WTC11 (cell line): ENCODE measurements at regions of chr7 and their contacts with region 1.

Region 1: DNA sequence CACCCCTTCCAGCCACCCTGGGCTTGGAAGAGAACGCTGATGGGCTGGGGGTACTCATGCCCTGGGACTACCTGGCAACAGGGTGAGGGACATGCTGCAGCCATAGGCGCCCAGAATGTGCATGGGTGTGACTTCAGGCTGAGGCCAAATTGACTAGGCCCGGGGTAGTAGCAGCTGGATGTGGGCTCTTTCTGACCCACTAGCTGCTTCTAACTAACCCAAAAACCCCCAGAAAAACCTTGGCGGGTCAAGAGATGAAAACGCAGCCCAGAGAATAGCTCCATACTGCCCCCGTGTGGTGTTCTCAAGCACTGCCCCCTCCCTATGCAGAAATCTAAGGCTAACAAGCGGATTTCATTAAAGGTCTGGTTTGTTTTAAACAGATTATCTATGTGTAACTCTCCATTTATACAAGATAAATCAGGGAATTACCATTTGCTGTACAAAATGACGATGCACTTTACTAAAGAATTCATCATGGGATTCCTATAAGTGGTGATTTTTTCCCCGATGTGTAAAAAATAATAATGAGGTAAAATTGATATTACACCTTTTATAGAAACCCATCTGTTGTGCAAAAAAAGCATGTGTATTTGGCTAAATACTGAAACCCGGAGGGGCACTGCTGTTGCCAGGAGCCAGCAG is 4.2 kb downstream of the SMARCD3 start:
- DNase-seq: peak; percentile 67
- ATAC-seq: peak; percentile 7; the same call in 1 of the 2 replicates
- H3K4me3 Mint-ChIP-seq: peak overlapping the region; percentile 65
- H3K27ac Mint-ChIP-seq: no peak overlapping the region
- H3K4me1 Mint-ChIP-seq: peaks cover 41% of the 10 kb centered on the region
- H3K27me3 Mint-ChIP-seq: peaks cover 43% of the 10 kb centered on the region
- CTCF ChIP-seq: peak; percentile 84

Region 2: DNA sequence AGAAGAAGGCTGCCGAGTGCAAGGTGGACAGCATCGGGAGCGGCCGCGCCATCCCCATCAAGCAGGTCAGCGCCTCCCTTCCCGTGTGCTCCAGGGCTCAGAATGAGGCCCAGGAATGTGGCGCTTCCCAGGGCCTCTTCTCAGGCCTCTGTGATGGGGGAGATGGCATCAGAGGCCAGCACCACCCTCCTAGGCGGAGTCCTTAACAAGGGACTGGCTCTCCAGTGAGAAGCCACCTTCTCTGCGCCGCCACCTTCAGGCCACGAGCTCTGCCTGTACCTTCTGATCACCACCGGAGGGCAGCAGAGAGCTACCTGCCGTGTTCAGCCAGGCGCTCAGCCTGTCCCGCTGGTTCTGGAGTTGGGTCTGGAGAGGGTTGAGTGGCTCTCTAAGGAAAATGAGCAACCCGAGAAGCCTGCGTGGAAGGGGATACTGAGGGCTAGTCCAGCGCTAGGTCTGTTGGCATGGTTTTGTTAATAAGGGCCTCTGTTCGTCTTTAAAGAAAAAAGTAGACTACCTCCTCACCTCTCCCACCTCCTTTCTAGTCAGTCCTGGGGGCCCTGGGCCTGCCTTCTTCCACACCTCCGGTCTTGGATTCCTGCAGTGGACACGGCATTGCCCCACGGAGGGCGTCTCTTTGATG is 120.4 kb before region 1 on chr7:
- CTCF ChIA-PET with region 1: interaction called, 43 read pairs
- POLR2A ChIA-PET with region 1: no interaction called
- DNase-seq: peak; percentile 93
- ATAC-seq: peak; percentile 70
- H3K4me3 Mint-ChIP-seq: peak overlapping the region; percentile 30
- H3K27ac Mint-ChIP-seq: peak overlapping the region; percentile 95
- H3K4me1 Mint-ChIP-seq: peaks cover 31% of the 10 kb centered on the region
- H3K27me3 Mint-ChIP-seq: peaks cover 5% of the 10 kb centered on the region; the same call in 1 of the 2 replicates
- CTCF ChIP-seq: peak; percentile 95

Region 3: GRCh38 chr7:151191544-151191943 is 52.8 kb before region 1 on chr7:
- CTCF ChIA-PET with region 1: interaction called, 11 read pairs
- POLR2A ChIA-PET with region 1: no interaction called
- DNase-seq: no peak
- ATAC-seq: no peak; the same call in 1 of the 2 replicates
- H3K4me3 Mint-ChIP-seq: no peak overlapping the region
- H3K27ac Mint-ChIP-seq: no peak overlapping the region
- H3K4me1 Mint-ChIP-seq: peaks cover 5% of the 10 kb centered on the region; the same call in 1 of the 2 replicates
- H3K27me3 Mint-ChIP-seq: peaks cover 4% of the 10 kb centered on the region
- CTCF ChIP-seq: no peak

Region 4: DNA sequence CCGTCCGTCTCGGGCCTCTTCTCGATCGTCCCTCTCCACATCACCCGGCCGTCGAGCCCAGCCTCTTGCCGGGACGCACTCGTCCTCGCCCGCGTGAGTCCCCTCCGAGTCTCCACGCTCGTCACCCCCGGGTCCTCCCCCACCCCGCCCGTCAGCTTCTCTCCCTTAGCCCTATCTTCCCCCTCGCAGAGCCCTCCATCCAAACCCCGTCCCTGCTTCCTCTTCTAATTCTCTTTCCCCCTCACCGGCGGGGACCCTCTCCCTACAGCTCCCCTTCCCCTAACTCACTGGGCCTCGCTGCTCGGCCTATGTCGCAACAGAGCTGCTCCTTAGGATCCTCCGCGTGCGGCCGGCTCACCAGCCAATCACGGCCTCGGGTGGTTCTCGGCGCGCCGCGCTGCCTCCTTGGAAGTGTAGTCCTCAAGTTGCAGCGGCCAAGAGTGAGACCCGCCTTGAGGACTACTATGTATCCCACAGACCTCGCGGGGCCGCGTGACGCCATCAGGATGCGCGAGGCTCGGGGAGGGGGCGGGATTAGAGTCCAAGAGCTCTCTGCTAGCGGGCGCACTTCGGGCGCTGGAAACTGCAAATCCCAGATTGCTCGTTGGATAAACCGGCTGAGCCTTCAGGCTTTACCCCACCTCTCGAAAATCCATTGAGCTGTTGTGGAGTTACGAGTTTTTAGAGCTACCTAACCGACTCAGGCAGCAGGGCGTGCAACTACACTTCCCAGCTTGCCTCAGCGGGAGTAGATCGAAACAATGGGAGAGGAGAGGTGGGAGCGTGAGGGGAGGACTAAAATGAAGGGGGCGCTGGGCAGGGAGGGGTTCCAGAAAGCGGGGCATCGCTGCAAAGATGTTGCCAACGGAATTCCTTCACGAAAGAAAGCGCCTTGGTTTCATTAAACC is 17.2 kb before region 1 on chr7 and contains the start of gene ABCF2:
- CTCF ChIA-PET with region 1: interaction called, 83 read pairs
- POLR2A ChIA-PET with region 1: interaction called, 6 read pairs
- DNase-seq: peak; percentile 100
- ATAC-seq: peak; percentile 98
- H3K4me3 Mint-ChIP-seq: peak within 1 kb of the TSS; percentile 95
- H3K27ac Mint-ChIP-seq: peak within 1 kb of the TSS; percentile 100
- H3K4me1 Mint-ChIP-seq: peaks cover 30% of the 10 kb centered on the region
- H3K27me3 Mint-ChIP-seq: no peaks in the 10 kb centered on the region
- CTCF ChIP-seq: no peak
- total RNA-seq, gene ABCF2: 41.3 to 43.7 TPM (median 43.5 TPM) in 3 replicates

Region 5: DNA sequence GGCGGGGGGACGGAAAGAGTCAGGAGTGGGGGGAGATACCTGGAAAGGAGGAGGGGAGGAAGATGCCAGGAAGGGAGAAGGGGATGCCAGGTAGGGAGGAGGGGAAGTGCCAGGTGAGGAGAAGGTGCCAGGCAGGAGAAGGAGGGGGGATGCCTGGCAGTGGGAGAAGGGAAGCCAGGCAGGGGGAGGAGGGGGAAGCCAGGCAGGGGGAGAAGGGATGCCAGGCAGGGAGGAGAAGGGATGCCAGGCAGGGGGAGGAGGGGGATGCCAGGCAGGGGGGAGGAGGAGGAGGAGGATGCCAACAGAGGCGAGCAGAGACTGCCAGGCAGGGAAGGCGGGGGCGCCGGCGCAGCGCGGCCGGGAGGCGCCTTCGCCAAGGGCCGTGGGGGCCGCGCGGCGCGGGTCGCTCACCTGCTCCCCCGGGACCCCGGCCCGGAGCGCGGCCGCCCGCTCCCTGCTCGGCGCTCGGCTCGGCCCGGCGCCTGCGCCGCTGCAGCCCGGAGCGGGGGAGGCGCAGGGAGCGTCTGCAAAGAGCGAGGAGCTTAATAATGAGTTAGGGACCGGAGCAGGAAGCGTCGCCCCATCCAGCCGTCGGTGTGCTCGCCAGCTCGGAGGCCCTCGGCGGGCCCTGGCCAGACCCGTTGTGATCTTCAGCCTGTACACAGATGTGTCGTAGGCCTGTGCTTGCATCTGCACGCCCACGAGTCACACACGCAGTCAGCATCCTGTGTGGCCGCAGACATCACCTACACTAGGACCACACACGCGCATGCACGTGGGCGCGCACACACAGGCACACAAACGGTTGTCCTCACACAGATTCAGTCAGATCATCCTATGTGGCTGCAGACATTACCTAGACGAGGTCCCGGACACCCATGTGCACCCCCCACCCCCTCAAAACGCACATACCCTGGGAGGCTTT is 32.6 kb after region 1 on chr7:
- CTCF ChIA-PET with region 1: interaction called, 16 read pairs
- POLR2A ChIA-PET with region 1: no interaction called
- DNase-seq: peak; percentile 59
- ATAC-seq: peak; percentile 80
- H3K4me3 Mint-ChIP-seq: peak overlapping the region; percentile 58
- H3K27ac Mint-ChIP-seq: no peak overlapping the region
- H3K4me1 Mint-ChIP-seq: peaks cover 28% of the 10 kb centered on the region
- H3K27me3 Mint-ChIP-seq: peaks cover 44% of the 10 kb centered on the region
- CTCF ChIP-seq: no peak

Region 6: DNA sequence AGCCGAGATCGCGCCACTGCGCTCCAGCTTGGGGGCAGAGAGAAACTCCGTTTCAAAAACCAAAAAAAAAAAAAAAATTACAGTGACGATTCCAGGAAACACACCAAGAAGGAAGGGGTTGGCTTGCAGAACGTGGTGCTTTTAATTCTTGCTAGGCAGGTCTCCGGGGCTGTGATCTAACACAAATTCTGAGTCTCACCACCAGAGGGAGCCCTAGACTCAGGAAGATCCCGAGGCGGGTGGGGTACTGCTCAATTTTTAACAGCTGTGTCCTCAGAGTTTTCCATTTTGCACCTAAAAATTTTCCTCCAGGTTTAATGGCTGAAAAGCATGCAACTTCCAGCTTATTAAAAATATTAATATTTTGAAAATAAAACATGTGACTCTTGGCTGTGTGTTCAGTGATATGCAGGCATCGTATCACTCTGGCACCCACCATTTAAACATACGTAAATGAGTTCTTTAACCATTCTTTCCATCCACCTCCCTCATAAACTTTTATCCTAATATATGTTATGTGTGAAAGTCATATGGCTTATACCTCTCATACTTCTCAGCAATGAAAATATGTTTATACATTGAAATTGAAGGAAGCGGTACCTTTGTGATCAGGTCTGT is 70.8 kb after region 1 on chr7:
- CTCF ChIA-PET with region 1: interaction called, 18 read pairs
- POLR2A ChIA-PET with region 1: interaction called, 4 read pairs
- DNase-seq: peak; percentile 75
- ATAC-seq: peak; percentile 76
- H3K4me3 Mint-ChIP-seq: no peak overlapping the region
- H3K27ac Mint-ChIP-seq: no peak overlapping the region
- H3K4me1 Mint-ChIP-seq: no peaks in the 10 kb centered on the region
- H3K27me3 Mint-ChIP-seq: peaks cover 6% of the 10 kb centered on the region
- CTCF ChIP-seq: peak; percentile 83

Region 7: DNA sequence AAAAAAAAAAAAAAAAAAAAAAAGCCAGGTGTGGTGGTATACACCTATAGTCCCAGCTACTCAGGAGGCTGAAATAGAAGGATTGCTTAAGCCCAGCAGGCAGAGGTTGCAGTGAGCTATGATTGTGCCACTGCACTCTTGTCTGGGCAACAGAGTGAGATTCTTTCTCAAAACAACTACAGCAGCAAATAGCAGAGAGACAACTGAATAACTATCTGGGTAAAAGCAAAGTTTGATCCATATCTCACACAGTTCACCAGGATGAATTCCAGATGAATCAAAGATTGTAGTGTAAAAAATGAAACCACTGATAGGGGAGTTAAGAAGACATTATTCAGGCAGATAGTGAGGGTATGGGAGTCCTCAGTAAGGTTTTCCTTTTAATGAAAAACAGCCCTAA is 85.9 kb after region 1 on chr7:
- CTCF ChIA-PET with region 1: no interaction called
- POLR2A ChIA-PET with region 1: no interaction called
- DNase-seq: no peak
- ATAC-seq: no peak
- H3K4me3 Mint-ChIP-seq: no peak overlapping the region
- H3K27ac Mint-ChIP-seq: no peak overlapping the region
- H3K4me1 Mint-ChIP-seq: peaks cover 19% of the 10 kb centered on the region
- H3K27me3 Mint-ChIP-seq: peaks cover under 1% of the 10 kb centered on the region
- CTCF ChIP-seq: no peak